H1 (cell line): ENCODE measurements at regions of chr10 and their contacts with region 1.

Region 1: DNA sequence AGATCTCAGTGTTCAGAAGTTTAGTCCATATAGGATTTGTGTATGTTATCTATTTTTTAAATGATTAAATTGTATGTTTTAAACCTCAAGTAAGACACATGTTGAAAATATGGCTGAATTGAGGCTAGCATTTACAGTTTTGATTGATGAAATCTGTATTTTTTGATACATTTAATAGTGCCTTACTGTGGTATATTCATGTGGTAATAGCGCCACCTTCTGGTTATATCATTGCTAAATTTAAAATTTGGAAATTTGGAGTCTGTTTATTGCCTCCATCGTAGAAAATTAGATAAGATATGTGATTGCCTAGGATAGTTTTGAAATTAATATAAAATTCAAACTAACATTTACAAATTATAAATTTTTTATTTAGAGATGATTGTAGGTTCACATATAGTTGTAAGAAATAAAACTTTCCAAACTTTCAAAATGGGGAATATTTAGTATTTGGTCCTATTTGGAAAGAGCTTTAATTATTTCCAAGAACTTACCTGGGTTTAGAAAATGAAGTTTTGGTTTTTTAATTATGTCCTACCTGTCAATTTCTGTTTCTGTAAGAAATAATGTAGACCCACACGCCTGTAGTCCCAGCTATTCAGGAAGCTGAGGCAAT is 19.1 kb upstream of the ARMS2 start:
- DNase-seq: no peak
- H3K4me3 ChIP-seq: no peak overlapping the region
- H3K27ac ChIP-seq: no peak overlapping the region
- H3K4me1 ChIP-seq: no peaks in the 10 kb centered on the region
- H3K27me3 ChIP-seq: no peaks in the 10 kb centered on the region
- CTCF ChIP-seq: peak in 2 of 3 experiments; percentile 41; a peak in 2 of 4 replicates
- EP300 ChIP-seq: no peak
- POLR2A ChIP-seq: no peak
- RAD21 ChIP-seq: peak; percentile 63 to 73

Region 2: GRCh38 chr10:122279725-122280141 is 155.6 kb before region 1 on chr10:
- CTCF ChIA-PET with region 1: interaction called, 74 read pairs
- POLR2A ChIA-PET with region 1: no interaction called
- DNase-seq: peak in 1 of 2 experiments; percentile 86
- H3K4me3 ChIP-seq: no peak overlapping the region
- H3K27ac ChIP-seq: no peak overlapping the region
- H3K4me1 ChIP-seq: peaks cover 0 to 6% (median 2%) of the 10 kb centered on the region in 4 experiments; a peak in 2 of 7 replicates
- H3K27me3 ChIP-seq: no peaks in the 10 kb centered on the region
- CTCF ChIP-seq: peak; percentile 87 to 93 (median 89)
- EP300 ChIP-seq: no peak
- POLR2A ChIP-seq: no peak
- RAD21 ChIP-seq: peak; percentile 93 to 97

Region 3: DNA sequence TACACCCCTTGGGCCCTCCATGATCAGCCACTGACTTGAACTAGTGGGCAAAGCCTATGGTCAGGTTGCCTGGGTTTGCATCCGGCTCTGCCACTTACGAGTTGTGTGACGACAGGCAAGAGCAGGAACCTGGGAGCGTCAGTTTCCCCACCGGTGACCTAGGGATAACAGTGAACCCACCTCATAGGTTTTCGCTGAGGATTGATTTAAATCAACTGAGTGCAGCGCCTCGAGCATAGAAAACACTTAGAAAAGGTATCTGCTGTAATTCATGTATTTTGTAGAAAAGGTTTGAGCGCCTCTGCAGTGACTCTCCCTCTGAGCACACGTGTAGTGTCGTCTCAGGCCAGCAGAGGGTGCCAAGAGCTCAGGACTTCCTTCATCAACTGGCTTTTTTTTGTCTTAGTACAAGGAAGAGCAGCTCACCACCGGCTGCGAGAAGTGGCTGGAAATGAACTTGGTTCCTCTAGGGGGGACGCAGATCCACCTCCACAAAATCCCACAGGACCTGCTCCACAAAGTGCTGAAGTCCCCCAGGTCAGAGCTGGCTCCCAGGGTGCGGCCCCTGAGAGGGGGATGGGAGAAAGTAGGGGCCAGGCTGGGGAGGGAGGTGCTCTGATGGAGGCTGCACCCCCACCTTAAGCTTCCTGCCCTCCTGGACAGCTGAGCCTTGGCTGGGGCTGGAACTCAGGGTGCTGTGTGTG is 136.6 kb before region 1 on chr10:
- CTCF ChIA-PET with region 1: interaction called, 85 read pairs
- POLR2A ChIA-PET with region 1: interaction called, 3 read pairs
- DNase-seq: peak; percentile 70 to 82
- H3K4me3 ChIP-seq: no peak overlapping the region
- H3K27ac ChIP-seq: no peak overlapping the region
- H3K4me1 ChIP-seq: peaks cover 0 to 3% (median 2%) of the 10 kb centered on the region in 4 experiments; a peak in 6 of 7 replicates
- H3K27me3 ChIP-seq: no peaks in the 10 kb centered on the region
- CTCF ChIP-seq: peak; percentile 81 to 90 (median 89)
- EP300 ChIP-seq: no peak
- POLR2A ChIP-seq: no peak
- RAD21 ChIP-seq: peak; percentile 96 to 98

Region 4: DNA sequence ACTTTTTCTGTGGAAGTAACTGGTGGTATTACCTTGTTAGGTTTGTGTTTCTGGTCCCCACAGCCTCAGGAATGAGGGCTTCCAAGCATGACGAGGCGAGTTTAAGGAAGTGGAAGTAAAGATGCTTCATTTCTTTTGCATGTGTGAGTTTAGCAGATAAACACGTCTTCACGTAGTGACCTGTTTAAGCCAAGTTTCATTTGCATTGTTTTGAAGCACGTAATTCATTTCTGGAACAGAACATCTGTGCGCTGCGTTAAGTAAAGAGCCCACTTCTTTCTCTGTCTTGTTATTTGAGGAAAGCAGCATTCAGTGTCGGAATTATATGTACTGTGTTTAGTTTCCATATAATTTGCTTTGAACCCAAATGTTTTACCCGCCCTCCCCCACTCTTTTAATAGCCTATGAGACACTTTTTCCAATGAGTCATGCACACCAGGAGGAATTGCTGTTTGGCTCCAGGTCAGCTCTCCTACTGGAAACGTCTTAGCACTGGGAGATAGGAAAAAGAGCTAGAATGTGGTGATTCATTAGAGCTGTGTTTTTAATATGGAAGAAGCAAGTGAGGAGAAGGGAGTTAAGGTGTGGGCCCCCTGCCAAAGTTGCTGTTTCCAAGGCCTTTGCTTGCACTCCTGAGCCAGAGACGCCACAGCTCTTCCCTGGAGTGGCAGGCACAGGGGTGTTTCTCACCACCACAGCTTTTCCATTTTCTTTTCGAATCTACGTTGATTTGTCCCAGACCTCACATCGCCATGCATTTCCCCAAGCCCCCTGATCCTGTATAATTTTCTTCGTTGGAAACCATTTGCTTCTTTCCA is 127.4 kb before region 1 on chr10:
- CTCF ChIA-PET with region 1: interaction called, 31 read pairs
- POLR2A ChIA-PET with region 1: no interaction called
- DNase-seq: no peak
- H3K4me3 ChIP-seq: no peak overlapping the region
- H3K27ac ChIP-seq: no peak overlapping the region
- H3K4me1 ChIP-seq: peaks cover 0 to 7% (median 1%) of the 10 kb centered on the region in 4 experiments; a peak in 3 of 7 replicates
- H3K27me3 ChIP-seq: no peaks in the 10 kb centered on the region
- CTCF ChIP-seq: no peak
- EP300 ChIP-seq: no peak
- POLR2A ChIP-seq: no peak
- RAD21 ChIP-seq: no peak

Region 5: GRCh38 chr10:122342293-122343134 is 92.8 kb before region 1 on chr10:
- CTCF ChIA-PET with region 1: interaction called, 32 read pairs
- POLR2A ChIA-PET with region 1: no interaction called
- DNase-seq: peak; percentile 21 to 55
- H3K4me3 ChIP-seq: no peak overlapping the region
- H3K27ac ChIP-seq: no peak overlapping the region
- H3K4me1 ChIP-seq: peaks cover 2 to 11% (median 8%) of the 10 kb centered on the region in 4 experiments; a peak in 6 of 7 replicates
- H3K27me3 ChIP-seq: no peaks in the 10 kb centered on the region
- CTCF ChIP-seq: peak; percentile 36 to 62 (median 57)
- EP300 ChIP-seq: no peak
- POLR2A ChIP-seq: no peak
- RAD21 ChIP-seq: peak; percentile 63 to 71

Region 6: DNA sequence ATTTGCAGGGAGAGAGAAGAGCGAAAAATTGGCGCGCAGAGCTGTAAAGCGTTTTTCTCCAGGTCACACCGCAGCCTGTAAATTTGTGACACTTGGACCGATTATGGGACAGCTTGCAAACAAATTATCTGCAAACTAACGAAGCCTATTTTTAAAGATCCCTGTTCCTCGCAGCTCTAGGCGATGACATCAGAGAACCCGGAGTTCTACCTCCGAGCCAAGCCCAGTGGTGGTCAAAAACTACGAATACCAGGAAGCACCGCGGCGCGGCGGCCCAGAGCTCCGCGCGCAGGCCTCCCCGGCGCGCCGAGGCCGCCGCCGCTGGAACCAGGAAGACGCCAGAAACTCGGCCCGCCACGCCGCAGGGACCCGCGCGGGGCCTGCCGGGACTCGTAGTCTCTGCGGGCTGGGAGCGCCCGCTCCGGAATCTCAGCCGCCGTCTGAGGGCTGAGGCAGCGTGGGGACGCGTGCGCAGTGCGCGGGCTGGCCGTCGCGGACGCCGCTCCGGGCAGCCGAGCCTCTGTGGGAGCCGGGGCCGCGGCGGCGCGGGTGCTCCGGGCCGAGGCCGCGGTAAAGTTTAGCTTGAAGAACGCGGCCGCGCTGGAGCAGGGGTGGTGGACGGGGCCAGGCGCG is 61.0 kb before region 1 on chr10 and contains the start of gene PLEKHA1:
- CTCF ChIA-PET with region 1: interaction called, 11 read pairs
- POLR2A ChIA-PET with region 1: interaction called, 3 read pairs
- DNase-seq: peak; percentile 62 to 91
- H3K4me3 ChIP-seq: peak within 1 kb of the TSS; percentile 64 to 78 (median 72)
- H3K27ac ChIP-seq: peak within 1 kb of the TSS; percentile 63; the same call in 1 of the 2 replicates
- H3K4me1 ChIP-seq: peaks cover 0 to 3% (median 0%) of the 10 kb centered on the region in 4 experiments; a peak in 2 of 7 replicates
- H3K27me3 ChIP-seq: peaks cover 0 to 11% (median 5%) of the 10 kb centered on the region in 4 experiments; a peak in 3 of 7 replicates
- CTCF ChIP-seq: peak in 1 of 3 experiments; percentile 8; a peak in 1 of 4 replicates
- EP300 ChIP-seq: peak in 1 of 2 experiments; percentile 64; a peak in 1 of 3 replicates
- POLR2A ChIP-seq: peak in 1 of 2 experiments; percentile 56; a peak in 2 of 3 replicates
- RAD21 ChIP-seq: no peak
- total RNA-seq, gene PLEKHA1: 35.7 and 39.7 TPM in 2 replicates

Region 7: DNA sequence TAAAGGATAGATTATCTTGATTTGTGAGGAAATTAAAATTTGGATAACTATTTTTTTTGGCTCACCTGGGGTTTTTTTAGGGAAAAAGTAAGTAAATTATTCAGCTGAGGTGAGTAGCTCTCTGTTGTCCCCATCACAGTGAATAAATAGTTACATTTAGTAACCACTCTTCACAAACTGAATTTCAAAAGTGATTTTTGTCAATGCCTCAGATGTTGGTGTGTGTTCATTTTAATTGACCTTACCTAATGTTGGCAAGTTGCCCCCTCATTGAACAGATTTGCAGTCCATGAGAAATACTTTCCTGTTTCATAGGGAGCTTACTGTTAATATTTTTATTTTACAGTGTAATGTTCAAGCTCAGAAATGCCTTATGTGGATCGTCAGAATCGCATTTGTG is 42.5 kb before region 1 on chr10:
- CTCF ChIA-PET with region 1: no interaction called
- POLR2A ChIA-PET with region 1: no interaction called
- DNase-seq: no peak
- H3K4me3 ChIP-seq: no peak overlapping the region
- H3K27ac ChIP-seq: no peak overlapping the region
- H3K4me1 ChIP-seq: no peaks in the 10 kb centered on the region
- H3K27me3 ChIP-seq: no peaks in the 10 kb centered on the region
- CTCF ChIP-seq: no peak
- EP300 ChIP-seq: no peak
- POLR2A ChIP-seq: no peak
- RAD21 ChIP-seq: no peak